ENCODE measurements at regions of chr18 and their contacts with region 1.

Region 1: GRCh38 chr18:10032331-10033015 is 118.7 kb downstream of the VAPA start:
- DNase-seq: no peak
- H3K4me3 ChIP-seq: no peak overlapping the region
- H3K27ac ChIP-seq: no peak overlapping the region
- H3K4me1 ChIP-seq: no peaks in the 10 kb centered on the region
- CTCF ChIP-seq: peak; percentile 24; the same call in 1 of the 2 replicates

Region 2: GRCh38 chr18:9869715-9870430 is 162.6 kb before region 1 on chr18:
- CTCF ChIA-PET with region 1: no interaction called
- POLR2A ChIA-PET with region 1: no interaction called
- intact Hi-C with region 1: no loop called
- DNase-seq: peak; percentile 13
- H3K4me3 ChIP-seq: no peak overlapping the region
- H3K27ac ChIP-seq: no peak overlapping the region
- H3K4me1 ChIP-seq: peaks cover 6% of the 10 kb centered on the region
- CTCF ChIP-seq: no peak

Region 3: GRCh38 chr18:10798727-10799308 is 766.3 kb after region 1 on chr18:
- CTCF ChIA-PET with region 1: interaction called, 11 read pairs
- POLR2A ChIA-PET with region 1: no interaction called
- intact Hi-C with region 1: no loop called
- DNase-seq: no peak
- H3K4me3 ChIP-seq: no peak overlapping the region
- H3K27ac ChIP-seq: no peak overlapping the region
- H3K4me1 ChIP-seq: no peaks in the 10 kb centered on the region
- CTCF ChIP-seq: no peak

Measured in OCI-LY7 (cell line).